Natural killer cell (primary cell): ENCODE measurements at regions of chr11 and their contacts with region 1.

Region 1: DNA sequence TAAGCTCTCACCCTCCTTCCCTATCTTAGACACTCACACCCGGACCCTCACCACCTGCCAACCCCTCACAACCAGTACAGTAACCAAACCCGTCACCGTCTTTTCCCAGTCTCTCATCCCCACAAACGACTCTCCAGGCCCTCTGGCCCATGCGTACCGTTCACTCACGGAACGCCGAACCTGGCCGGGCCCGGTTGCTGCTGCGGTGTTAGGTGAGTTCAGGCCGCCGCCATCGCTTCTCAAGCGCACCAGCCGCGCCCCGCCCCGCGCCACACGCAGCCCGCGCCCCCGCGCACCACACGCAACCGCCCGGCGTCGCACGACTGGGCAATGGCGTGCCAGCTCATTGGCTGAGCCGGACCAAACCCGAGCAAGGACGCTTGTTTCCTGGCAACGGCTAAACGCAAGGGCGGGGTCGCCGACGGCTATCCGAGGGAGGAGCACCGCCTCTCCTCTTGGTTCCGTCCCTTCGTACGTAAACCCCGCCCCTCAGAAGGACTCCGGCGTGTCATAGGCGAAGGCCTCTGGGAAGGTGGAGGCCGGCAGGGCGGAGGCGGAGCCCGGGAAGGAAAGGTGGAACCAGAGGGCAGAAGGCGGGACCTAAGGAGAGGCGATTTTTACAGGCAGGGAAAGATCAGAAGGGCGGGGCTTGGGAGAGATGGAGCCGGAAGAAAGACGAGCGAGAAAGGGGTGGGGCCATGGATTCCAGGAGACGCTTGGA is at the start of gene FHIP1B:
- DNase-seq: peak; percentile 98 to 100
- ATAC-seq: peak; percentile 91 to 98 (median 91)
- H3K4me3 ChIP-seq: peak within 1 kb of the TSS; percentile 98
- H3K4me3 Mint-ChIP-seq: peak within 1 kb of the TSS; percentile 98
- H3K27ac ChIP-seq: peak within 1 kb of the TSS; percentile 91
- H3K27ac Mint-ChIP-seq: peak within 1 kb of the TSS; percentile 89 to 98
- H3K4me1 ChIP-seq: peaks cover 25% of the 10 kb centered on the region
- H3K4me1 Mint-ChIP-seq: peaks cover 51 to 57% of the 10 kb centered on the region in 2 donors
- H3K27me3 ChIP-seq: no peaks in the 10 kb centered on the region
- H3K27me3 Mint-ChIP-seq: no peaks in the 10 kb centered on the region
- CTCF ChIP-seq: no peak
- total RNA-seq, gene FHIP1B: 50.6 to 76.9 (median 58.4) TPM

Region 2: GRCh38 chr11:6481012-6481923 is 246.7 kb after region 1 on chr11 and contains the starts of genes ARFIP2 and TIMM10B:
- intact Hi-C with region 1: loop called (anchors 1 kb)
- DNase-seq: peak; percentile 95 to 99
- ATAC-seq: peak; percentile 92 to 98 (median 96)
- H3K4me3 ChIP-seq: peak within 1 kb of the TSS; percentile 74
- H3K4me3 Mint-ChIP-seq: peak within 1 kb of the TSS; percentile 91
- H3K27ac ChIP-seq: peak within 1 kb of the TSS; percentile 95
- H3K27ac Mint-ChIP-seq: peak within 1 kb of the TSS; percentile 95 to 99
- H3K4me1 ChIP-seq: peaks cover 22% of the 10 kb centered on the region
- H3K4me1 Mint-ChIP-seq: peaks cover 32 to 37% of the 10 kb centered on the region in 2 donors
- H3K27me3 ChIP-seq: no peaks in the 10 kb centered on the region
- H3K27me3 Mint-ChIP-seq: no peaks in the 10 kb centered on the region
- CTCF ChIP-seq: no peak
- total RNA-seq, gene ARFIP2: 44.7 to 62.3 (median 51.4) TPM
- total RNA-seq, gene TIMM10B: 69.6 to 92.8 (median 71.4) TPM